ENCODE measurements at regions of chr11 and their contacts with region 1.

Region 1: DNA sequence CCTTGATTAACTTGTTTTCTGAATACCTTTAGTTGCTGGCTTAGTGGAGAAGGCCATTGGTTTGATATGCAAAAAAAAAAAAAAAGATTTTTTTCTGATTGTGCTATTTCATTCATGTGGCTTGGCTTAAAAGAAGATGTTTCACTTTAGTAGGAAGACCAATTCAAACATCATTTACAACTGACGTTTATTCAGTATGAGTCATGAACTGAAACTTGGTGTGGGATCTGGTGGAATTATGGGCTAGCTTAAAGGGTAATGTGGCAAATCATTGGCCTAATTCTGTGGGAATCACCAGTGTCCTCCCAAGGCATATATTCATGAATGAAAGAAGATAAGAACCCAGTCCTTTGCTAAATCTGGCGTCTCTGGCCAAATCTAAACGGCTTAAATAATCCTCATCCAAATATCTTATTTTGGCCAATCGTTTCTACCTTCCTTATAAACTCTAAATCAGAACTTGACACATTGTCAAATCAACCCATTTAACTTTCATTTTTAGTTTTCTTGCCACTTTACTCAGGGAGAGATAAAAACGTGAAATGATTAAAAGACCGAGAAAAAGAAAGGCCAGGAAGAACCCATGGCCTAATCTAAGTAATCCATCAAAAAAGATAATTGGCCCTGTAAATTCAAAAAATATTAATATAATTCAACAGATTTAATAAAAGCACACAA is 77.0 kb downstream of the DDIAS start:
- DNase-seq: no peak
- H3K4me3 Mint-ChIP-seq: peak overlapping the region; percentile 21
- H3K27ac Mint-ChIP-seq: peak overlapping the region; percentile 42
- H3K4me1 Mint-ChIP-seq: peaks cover 38% of the 10 kb centered on the region
- H3K27me3 Mint-ChIP-seq: peaks cover 3% of the 10 kb centered on the region

Region 2: DNA sequence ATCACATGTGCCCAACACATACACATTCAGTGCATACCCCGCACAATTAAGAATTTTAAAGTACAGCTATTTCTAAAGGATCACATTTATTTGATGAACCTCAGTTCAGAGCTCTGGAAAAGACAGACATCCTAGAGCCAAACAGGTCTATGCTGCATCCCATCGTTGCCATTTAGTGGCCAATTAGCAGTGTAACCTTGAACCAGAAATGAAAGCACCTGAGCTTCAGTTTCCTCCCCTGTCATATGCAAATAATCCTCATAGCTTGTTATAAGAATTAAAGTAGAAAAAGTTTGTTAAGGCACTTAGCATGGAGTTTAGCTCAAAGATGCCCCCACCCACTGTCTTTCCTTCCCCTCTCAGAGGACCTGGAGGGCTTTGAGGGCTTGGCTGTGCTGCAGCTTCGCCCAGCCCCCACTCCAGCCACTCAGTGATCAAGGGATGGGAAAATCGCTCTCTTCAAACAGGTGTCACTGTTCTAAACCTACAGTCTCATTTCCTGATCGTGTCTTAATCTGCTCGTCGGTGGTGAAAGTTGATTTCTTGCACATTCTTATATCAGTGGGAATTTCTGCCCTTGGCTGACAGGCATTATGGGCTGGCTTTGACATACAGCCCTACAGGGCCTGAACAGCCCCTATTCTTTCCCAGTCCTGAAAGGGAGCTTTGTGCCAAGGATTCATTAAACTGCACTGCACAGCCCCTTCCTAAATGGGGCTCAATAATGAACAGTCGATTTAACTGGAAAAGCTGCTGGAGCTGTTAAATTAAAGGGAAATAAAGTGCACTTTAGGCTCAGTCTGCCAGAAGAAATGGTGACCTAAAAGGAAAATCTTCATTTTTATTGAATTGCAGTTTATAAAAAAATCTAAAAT is 221.6 kb before region 1 on chr11:
- intact Hi-C with region 1: no loop called
- DNase-seq: no peak
- H3K4me3 Mint-ChIP-seq: no peak overlapping the region
- H3K27ac Mint-ChIP-seq: no peak overlapping the region
- H3K4me1 Mint-ChIP-seq: peaks cover 13% of the 10 kb centered on the region
- H3K27me3 Mint-ChIP-seq: peaks cover 11% of the 10 kb centered on the region

Region 3: GRCh38 chr11:82900277-82901164 is 78.0 kb before region 1 on chr11 and contains the start of gene PRCP:
- intact Hi-C with region 1: loop called (anchors 1 kb)
- DNase-seq: peak; percentile 93
- H3K4me3 Mint-ChIP-seq: peak within 1 kb of the TSS; percentile 99
- H3K27ac Mint-ChIP-seq: peak within 1 kb of the TSS; percentile 100
- H3K4me1 Mint-ChIP-seq: peaks cover 70% of the 10 kb centered on the region
- H3K27me3 Mint-ChIP-seq: no peaks in the 10 kb centered on the region
- total RNA-seq, gene PRCP: 22.7 and 24.0 TPM in 2 replicates

Region 4: GRCh38 chr11:82927254-82927880 is 51.2 kb before region 1 on chr11:
- intact Hi-C with region 1: loop called (anchors 5 kb)
- DNase-seq: no peak
- H3K4me3 Mint-ChIP-seq: no peak overlapping the region
- H3K27ac Mint-ChIP-seq: no peak overlapping the region
- H3K4me1 Mint-ChIP-seq: peaks cover 19% of the 10 kb centered on the region
- H3K27me3 Mint-ChIP-seq: no peaks in the 10 kb centered on the region

Region 5: GRCh38 chr11:82959987-82960778 is 18.4 kb before region 1 on chr11:
- intact Hi-C with region 1: loop called (anchors 1 kb)
- DNase-seq: peak; percentile 42
- H3K4me3 Mint-ChIP-seq: peak overlapping the region; percentile 68
- H3K27ac Mint-ChIP-seq: peak overlapping the region; percentile 91
- H3K4me1 Mint-ChIP-seq: peaks cover 59% of the 10 kb centered on the region
- H3K27me3 Mint-ChIP-seq: no peaks in the 10 kb centered on the region

Region 6: GRCh38 chr11:82996966-82997606 is 18.5 kb after region 1 on chr11:
- intact Hi-C with region 1: loop called (anchors 1 kb)
- DNase-seq: no peak
- H3K4me3 Mint-ChIP-seq: no peak overlapping the region
- H3K27ac Mint-ChIP-seq: peak overlapping the region; percentile 37
- H3K4me1 Mint-ChIP-seq: peaks cover 67% of the 10 kb centered on the region
- H3K27me3 Mint-ChIP-seq: no peaks in the 10 kb centered on the region

Region 7: GRCh38 chr11:83007909-83008580 is 29.5 kb after region 1 on chr11:
- intact Hi-C with region 1: loop called (anchors 1 kb)
- DNase-seq: no peak
- H3K4me3 Mint-ChIP-seq: no peak overlapping the region
- H3K27ac Mint-ChIP-seq: no peak overlapping the region
- H3K4me1 Mint-ChIP-seq: peaks cover 57% of the 10 kb centered on the region
- H3K27me3 Mint-ChIP-seq: no peaks in the 10 kb centered on the region

Region 8: DNA sequence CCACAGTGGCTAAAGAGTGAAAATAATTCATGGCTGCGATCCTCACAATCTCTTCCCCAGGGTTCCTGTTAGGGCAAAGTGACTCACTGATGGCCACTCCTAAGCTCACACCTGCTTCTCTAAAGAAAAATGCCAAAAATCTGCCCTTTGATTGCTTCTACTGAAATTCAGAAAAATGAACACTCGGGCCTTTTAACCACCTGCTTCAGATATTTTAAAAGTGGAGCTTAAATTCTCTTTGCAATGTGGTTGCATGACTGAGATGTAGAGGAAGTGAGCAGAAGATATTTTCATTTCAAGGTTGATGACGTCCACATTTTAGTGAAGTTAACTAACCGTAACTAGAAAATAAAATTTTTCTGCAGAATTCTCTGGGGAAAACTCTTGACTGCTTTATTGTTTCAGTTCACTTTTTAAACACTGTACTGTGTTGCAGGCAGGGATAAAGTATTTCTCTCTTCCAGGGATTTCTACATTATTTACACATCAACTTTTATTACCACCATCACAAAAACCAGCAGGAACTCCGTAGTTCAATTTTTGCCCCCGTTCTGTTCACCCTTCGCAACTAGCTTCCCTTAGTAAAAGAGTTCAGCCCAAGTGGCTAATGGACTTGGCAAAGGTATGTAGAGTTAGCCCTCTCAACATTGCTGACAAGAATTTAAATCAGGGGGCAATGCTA is 84.7 kb after region 1 on chr11:
- intact Hi-C with region 1: loop called (anchors 2 kb)
- DNase-seq: no peak
- H3K4me3 Mint-ChIP-seq: peak overlapping the region; percentile 74
- H3K27ac Mint-ChIP-seq: peak overlapping the region; percentile 88
- H3K4me1 Mint-ChIP-seq: peaks cover 25% of the 10 kb centered on the region
- H3K27me3 Mint-ChIP-seq: no peaks in the 10 kb centered on the region